WTC11 (cell line): ENCODE measurements at regions of chr2 and their contacts with region 1.

Region 1: DNA sequence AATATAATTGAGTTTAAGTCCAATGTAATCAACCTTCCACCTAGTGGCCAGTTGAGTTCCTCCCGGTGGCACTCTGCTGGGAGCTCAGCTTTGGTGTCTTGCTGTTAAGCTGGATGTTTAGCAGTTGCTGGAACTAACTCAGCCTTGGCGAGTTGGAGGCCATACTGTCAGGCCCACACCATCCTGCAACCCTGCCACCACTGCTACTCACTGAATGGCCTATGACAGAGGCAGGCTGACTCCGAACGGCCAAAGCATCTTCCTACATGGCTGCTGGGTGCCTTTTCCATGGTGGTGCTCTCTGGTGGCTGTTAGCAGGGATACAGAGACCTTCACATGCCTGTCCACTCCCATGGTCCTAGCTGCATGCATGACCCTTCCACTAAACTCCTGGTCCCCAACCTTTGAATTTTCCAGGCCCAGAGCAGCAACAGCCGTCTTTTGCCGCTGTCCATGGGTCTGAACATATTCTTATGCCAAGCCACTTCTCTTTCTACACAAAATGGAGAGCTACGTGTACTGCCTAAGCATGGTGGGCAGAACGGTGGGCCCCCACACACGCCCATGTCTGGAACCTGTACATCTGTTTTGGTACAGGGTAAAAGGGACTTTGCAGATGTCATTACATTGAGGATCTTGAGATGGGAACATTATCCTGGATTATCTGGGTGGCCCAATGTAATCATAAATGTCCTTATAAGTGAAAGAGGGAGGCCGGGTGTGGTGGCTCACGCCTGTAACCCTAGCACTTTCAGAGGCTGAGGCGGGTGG is 15.0 kb upstream of the TRAF3IP1 start:
- DNase-seq: no peak
- ATAC-seq: peak; percentile 36
- H3K4me3 Mint-ChIP-seq: no peak overlapping the region
- H3K27ac Mint-ChIP-seq: no peak overlapping the region; the same call in 1 of the 2 replicates
- H3K4me1 Mint-ChIP-seq: no peaks in the 10 kb centered on the region; the same call in 1 of the 2 replicates
- H3K27me3 Mint-ChIP-seq: no peaks in the 10 kb centered on the region
- CTCF ChIP-seq: no peak

Region 2: DNA sequence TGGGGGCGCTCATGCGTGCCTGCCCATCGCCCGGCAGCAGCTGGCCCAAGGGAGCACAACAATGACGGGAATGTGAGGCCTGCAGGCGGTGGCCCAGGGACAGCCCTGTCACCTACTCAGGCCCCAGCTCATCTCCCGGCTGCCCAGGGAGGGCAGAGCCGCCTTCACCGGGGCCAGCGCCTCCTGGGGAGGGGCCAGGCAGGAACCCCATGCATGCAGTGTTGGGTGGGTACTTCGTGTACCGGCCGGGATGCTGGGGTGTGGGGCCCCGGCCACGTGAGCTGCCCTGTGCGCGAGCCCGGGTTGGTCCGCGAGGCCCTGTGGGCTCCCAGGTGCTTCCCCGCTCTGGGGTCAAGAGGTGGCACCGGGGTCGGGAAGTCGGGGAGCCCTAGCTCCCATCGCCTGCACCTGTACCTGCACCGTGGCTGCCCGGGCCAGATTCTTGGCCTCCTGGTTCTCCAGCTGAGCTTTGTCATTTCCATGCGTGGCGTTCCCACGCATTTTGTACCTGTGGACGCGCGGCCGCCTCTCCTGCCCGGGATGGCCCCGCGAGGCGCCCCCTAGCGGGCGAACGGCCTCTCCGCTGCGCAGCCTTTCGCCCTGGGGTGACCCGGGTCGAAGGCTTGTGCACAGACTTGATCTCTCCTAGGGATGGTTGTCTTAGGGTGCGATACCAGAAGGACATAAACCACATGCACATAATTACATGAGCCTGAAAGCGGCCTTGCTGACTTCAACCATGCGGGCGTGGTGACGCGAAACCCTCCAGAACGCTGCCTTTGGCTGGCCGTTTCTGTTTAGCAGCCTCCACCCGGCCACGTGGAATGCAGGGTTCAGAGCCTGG is 165.9 kb before region 1 on chr2:
- CTCF ChIA-PET with region 1: no interaction called
- POLR2A ChIA-PET with region 1: no interaction called
- DNase-seq: peak; percentile 64
- ATAC-seq: peak; percentile 64
- H3K4me3 Mint-ChIP-seq: no peak overlapping the region
- H3K27ac Mint-ChIP-seq: no peak overlapping the region
- H3K4me1 Mint-ChIP-seq: no peaks in the 10 kb centered on the region
- H3K27me3 Mint-ChIP-seq: no peaks in the 10 kb centered on the region
- CTCF ChIP-seq: peak; percentile 97

Region 3: GRCh38 chr2:238277695-238278094 is 27.6 kb before region 1 on chr2:
- CTCF ChIA-PET with region 1: interaction called, 12 read pairs
- POLR2A ChIA-PET with region 1: no interaction called
- DNase-seq: peak; percentile 61
- ATAC-seq: peak; percentile 89
- H3K4me3 Mint-ChIP-seq: no peak overlapping the region
- H3K27ac Mint-ChIP-seq: peak overlapping the region; percentile 89
- H3K4me1 Mint-ChIP-seq: peaks cover 4% of the 10 kb centered on the region; the same call in 1 of the 2 replicates
- H3K27me3 Mint-ChIP-seq: no peaks in the 10 kb centered on the region
- CTCF ChIP-seq: no peak; the same call in 1 of the 2 replicates

Region 4: GRCh38 chr2:238288650-238289573 is 16.4 kb before region 1 on chr2:
- CTCF ChIA-PET with region 1: interaction called, 24 read pairs
- POLR2A ChIA-PET with region 1: interaction called, 4 read pairs
- DNase-seq: peak; percentile 99
- ATAC-seq: peak; percentile 85
- H3K4me3 Mint-ChIP-seq: peak overlapping the region; percentile 79
- H3K27ac Mint-ChIP-seq: peak overlapping the region; percentile 58; the same call in 1 of the 2 replicates
- H3K4me1 Mint-ChIP-seq: peaks cover 23% of the 10 kb centered on the region
- H3K27me3 Mint-ChIP-seq: peaks cover 4% of the 10 kb centered on the region; the same call in 1 of the 2 replicates
- CTCF ChIP-seq: no peak